ENCODE measurements at regions of chr10 and their contacts with region 1.

Region 1: GRCh38 chr10:50224330-50224952 is 26.9 kb downstream of the ASAH2 start:
- DNase-seq: no peak
- ATAC-seq: peak; percentile 47 to 67
- H3K4me3 ChIP-seq: no peak overlapping the region
- H3K27ac ChIP-seq: no peak overlapping the region
- H3K4me1 ChIP-seq: no peaks in the 10 kb centered on the region
- H3K27me3 ChIP-seq: no peaks in the 10 kb centered on the region

Region 2: GRCh38 chr10:49592726-49593563 is 631.5 kb before region 1 on chr10:
- intact Hi-C with region 1: loop called (anchors 5 to 10 kb)
- DNase-seq: peak in 2 of 3 donors; percentile 41 to 69
- ATAC-seq: peak; percentile 64 to 69
- H3K4me3 ChIP-seq: no peak overlapping the region
- H3K27ac ChIP-seq: no peak overlapping the region
- H3K4me1 ChIP-seq: no peaks in the 10 kb centered on the region
- H3K27me3 ChIP-seq: no peaks in the 10 kb centered on the region

Region 3: DNA sequence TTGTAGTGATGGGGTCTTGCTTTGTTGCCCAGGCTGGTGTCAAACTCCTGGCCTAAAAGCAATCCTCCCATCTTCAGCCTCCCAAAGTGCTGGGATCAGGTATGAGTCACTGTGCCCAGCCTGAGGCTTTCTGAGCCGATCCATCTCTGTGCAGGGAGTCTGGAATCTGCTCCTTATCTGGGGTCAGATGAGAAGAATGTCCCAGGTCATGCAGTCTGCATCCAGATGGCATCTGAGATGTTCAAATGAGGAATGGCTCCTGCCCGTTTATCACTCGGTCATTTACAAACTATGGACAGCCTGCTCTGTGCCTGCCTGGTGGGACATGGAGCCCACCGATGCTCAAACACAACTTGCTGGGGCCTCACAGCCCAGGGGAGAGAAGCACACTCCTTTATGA is 625.5 kb before region 1 on chr10:
- intact Hi-C with region 1: loop called (anchors 5 to 10 kb)
- DNase-seq: no peak
- ATAC-seq: no peak
- H3K4me3 ChIP-seq: no peak overlapping the region
- H3K27ac ChIP-seq: no peak overlapping the region
- H3K4me1 ChIP-seq: no peaks in the 10 kb centered on the region
- H3K27me3 ChIP-seq: no peaks in the 10 kb centered on the region

Region 4: DNA sequence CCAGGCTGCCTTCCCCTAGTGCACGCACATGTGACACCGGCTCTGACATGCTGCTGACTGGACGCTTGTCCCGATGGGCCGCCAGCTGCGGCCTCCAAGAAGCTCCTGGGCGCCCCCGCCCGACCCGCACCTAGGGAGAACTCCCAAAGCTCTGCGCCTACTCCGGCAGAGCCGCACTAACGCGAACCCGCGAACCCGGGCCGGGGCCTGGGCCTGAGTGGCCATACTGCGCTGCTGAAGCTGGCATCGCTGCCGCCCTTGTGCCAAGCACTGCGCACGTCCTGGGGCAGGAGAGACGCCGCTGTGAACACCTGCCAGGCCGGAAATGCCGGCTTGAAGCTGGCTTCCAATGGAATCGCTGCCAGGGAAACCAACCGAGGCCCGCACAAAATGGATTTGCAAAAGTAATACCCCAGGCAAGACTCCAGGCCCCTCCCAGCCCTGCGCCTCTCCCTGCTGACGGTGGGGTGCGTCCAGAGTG is 71.6 kb before region 1 on chr10:
- intact Hi-C with region 1: no loop called
- DNase-seq: peak; percentile 16 to 55 (median 48)
- ATAC-seq: peak; percentile 41 to 60
- H3K4me3 ChIP-seq: peak overlapping the region; percentile 48
- H3K27ac ChIP-seq: no peak overlapping the region
- H3K4me1 ChIP-seq: no peaks in the 10 kb centered on the region
- H3K27me3 ChIP-seq: no peaks in the 10 kb centered on the region

Measured in right cardiac atrium (tissue), 5 donors.